CD4-positive, alpha-beta memory T cell (primary cell): ENCODE measurements at regions of chr14 and their contacts with region 1.

Region 1: GRCh38 chr14:60184146-60184904 is 19.1 kb upstream of the DHRS7 start:
- DNase-seq: peak; percentile 59 to 78 (median 74)
- H3K4me3 ChIP-seq: peak overlapping the region; percentile 21 to 42
- H3K4me3 Mint-ChIP-seq: peak overlapping the region; percentile 72 to 86 (median 84)
- H3K27ac ChIP-seq: peak overlapping the region; percentile 58
- H3K27ac Mint-ChIP-seq: peak overlapping the region; percentile 84 to 96 (median 88)
- H3K4me1 ChIP-seq: peaks cover 8% of the 10 kb centered on the region
- H3K4me1 Mint-ChIP-seq: peaks cover 7 to 13% (median 8%) of the 10 kb centered on the region in 4 donors
- H3K27me3 ChIP-seq: no peaks in the 10 kb centered on the region
- H3K27me3 Mint-ChIP-seq: no peaks in the 10 kb centered on the region

Region 2: GRCh38 chr14:59507063-59507780 is 677.1 kb before region 1 on chr14:
- CTCF ChIA-PET with region 1: interaction called, 5 read pairs
- POLR2A ChIA-PET with region 1: no interaction called
- intact Hi-C with region 1: loop called (anchors 5 kb)
- DNase-seq: peak; percentile 17 to 59 (median 33)
- H3K4me3 ChIP-seq: no peak overlapping the region
- H3K4me3 Mint-ChIP-seq: no peak overlapping the region
- H3K27ac ChIP-seq: no peak overlapping the region
- H3K27ac Mint-ChIP-seq: peak overlapping the region in 1 of 7 donors; percentile 25
- H3K4me1 ChIP-seq: peaks cover 16% of the 10 kb centered on the region
- H3K4me1 Mint-ChIP-seq: peaks cover 11 to 19% (median 11%) of the 10 kb centered on the region in 4 donors
- H3K27me3 ChIP-seq: no peaks in the 10 kb centered on the region
- H3K27me3 Mint-ChIP-seq: peaks cover 0 to 4% of the 10 kb centered on the region in 2 donors

Region 3: GRCh38 chr14:59905188-59905587 is 279.1 kb before region 1 on chr14:
- CTCF ChIA-PET with region 1: no interaction called
- POLR2A ChIA-PET with region 1: no interaction called
- intact Hi-C with region 1: no loop called
- DNase-seq: no peak
- H3K4me3 ChIP-seq: no peak overlapping the region
- H3K4me3 Mint-ChIP-seq: no peak overlapping the region
- H3K27ac ChIP-seq: no peak overlapping the region
- H3K27ac Mint-ChIP-seq: no peak overlapping the region
- H3K4me1 ChIP-seq: no peaks in the 10 kb centered on the region
- H3K4me1 Mint-ChIP-seq: no peaks in the 10 kb centered on the region
- H3K27me3 ChIP-seq: no peaks in the 10 kb centered on the region
- H3K27me3 Mint-ChIP-seq: peaks cover 1 to 5% of the 10 kb centered on the region in 2 donors

Region 4: GRCh38 chr14:59964251-59965007 is 219.9 kb before region 1 on chr14:
- CTCF ChIA-PET with region 1: interaction called, 320 read pairs
- POLR2A ChIA-PET with region 1: interaction called, 17 read pairs
- intact Hi-C with region 1: loop called (anchors 1 kb)
- DNase-seq: peak in 1 of 5 donors; percentile 5
- H3K4me3 ChIP-seq: no peak overlapping the region
- H3K4me3 Mint-ChIP-seq: peak overlapping the region; percentile 77 to 98 (median 94)
- H3K27ac ChIP-seq: no peak overlapping the region
- H3K27ac Mint-ChIP-seq: peak overlapping the region in 5 of 7 donors; percentile 75 to 99 (median 99)
- H3K4me1 ChIP-seq: no peaks in the 10 kb centered on the region
- H3K4me1 Mint-ChIP-seq: peaks cover 0 to 13% (median 10%) of the 10 kb centered on the region in 4 donors
- H3K27me3 ChIP-seq: no peaks in the 10 kb centered on the region
- H3K27me3 Mint-ChIP-seq: peaks cover 2 to 3% of the 10 kb centered on the region in 2 donors

Region 5: DNA sequence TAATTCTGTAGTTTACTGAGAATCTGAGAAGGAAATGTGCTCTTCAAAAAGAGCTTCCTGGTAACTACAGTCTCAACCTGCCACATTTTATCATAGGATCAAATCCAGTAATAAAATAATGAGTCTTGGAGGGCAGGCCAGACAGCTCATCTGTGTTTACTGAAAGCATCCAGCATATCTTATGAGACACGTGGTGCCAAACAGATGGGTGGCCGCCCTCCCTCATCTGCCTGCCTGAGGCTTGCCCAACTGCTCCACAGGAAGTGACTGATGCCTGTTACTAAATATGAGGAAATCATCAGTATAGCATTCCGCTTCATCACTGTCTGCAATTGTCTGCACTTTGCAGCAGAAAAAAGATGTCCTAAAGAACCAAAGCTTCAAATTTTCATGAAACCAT is 32.6 kb before region 1 on chr14:
- CTCF ChIA-PET with region 1: interaction called, 14 read pairs
- POLR2A ChIA-PET with region 1: interaction called, 3 read pairs
- intact Hi-C with region 1: no loop called
- DNase-seq: peak; percentile 63 to 85 (median 68)
- H3K4me3 ChIP-seq: no peak overlapping the region
- H3K4me3 Mint-ChIP-seq: peak overlapping the region in 7 of 8 donors; percentile 17 to 69 (median 36)
- H3K27ac ChIP-seq: peak overlapping the region; percentile 50
- H3K27ac Mint-ChIP-seq: peak overlapping the region; percentile 90 to 95 (median 94)
- H3K4me1 ChIP-seq: peaks cover 49% of the 10 kb centered on the region
- H3K4me1 Mint-ChIP-seq: peaks cover 35 to 54% (median 44%) of the 10 kb centered on the region in 4 donors
- H3K27me3 ChIP-seq: no peaks in the 10 kb centered on the region
- H3K27me3 Mint-ChIP-seq: no peaks in the 10 kb centered on the region

Region 6: GRCh38 chr14:60266021-60266937 is 82.0 kb after region 1 on chr14:
- CTCF ChIA-PET with region 1: interaction called, 7 read pairs
- POLR2A ChIA-PET with region 1: no interaction called
- intact Hi-C with region 1: loop called (anchors 5 kb)
- DNase-seq: peak in 4 of 5 donors; percentile 16 to 31 (median 24)
- H3K4me3 ChIP-seq: no peak overlapping the region
- H3K4me3 Mint-ChIP-seq: no peak overlapping the region
- H3K27ac ChIP-seq: no peak overlapping the region
- H3K27ac Mint-ChIP-seq: no peak overlapping the region
- H3K4me1 ChIP-seq: peaks cover 8% of the 10 kb centered on the region
- H3K4me1 Mint-ChIP-seq: peaks cover 19 to 39% (median 34%) of the 10 kb centered on the region in 4 donors
- H3K27me3 ChIP-seq: no peaks in the 10 kb centered on the region
- H3K27me3 Mint-ChIP-seq: no peaks in the 10 kb centered on the region